AG04449 (cell line): ENCODE measurements at regions of chr22 and their contacts with region 1.

Region 1: GRCh38 chr22:28855355-28856094 is 27.8 kb upstream of the ZNRF3 start:
- DNase-seq: peak; percentile 14
- H3K4me3 ChIP-seq: no peak overlapping the region
- CTCF ChIP-seq: peak; percentile 82

Region 2: GRCh38 chr22:28779833-28780232 is 75.7 kb before region 1 on chr22:
- CTCF ChIA-PET with region 1: no interaction called
- POLR2A ChIA-PET with region 1: no interaction called
- DNase-seq: no peak
- H3K4me3 ChIP-seq: no peak overlapping the region
- CTCF ChIP-seq: no peak

Region 3: DNA sequence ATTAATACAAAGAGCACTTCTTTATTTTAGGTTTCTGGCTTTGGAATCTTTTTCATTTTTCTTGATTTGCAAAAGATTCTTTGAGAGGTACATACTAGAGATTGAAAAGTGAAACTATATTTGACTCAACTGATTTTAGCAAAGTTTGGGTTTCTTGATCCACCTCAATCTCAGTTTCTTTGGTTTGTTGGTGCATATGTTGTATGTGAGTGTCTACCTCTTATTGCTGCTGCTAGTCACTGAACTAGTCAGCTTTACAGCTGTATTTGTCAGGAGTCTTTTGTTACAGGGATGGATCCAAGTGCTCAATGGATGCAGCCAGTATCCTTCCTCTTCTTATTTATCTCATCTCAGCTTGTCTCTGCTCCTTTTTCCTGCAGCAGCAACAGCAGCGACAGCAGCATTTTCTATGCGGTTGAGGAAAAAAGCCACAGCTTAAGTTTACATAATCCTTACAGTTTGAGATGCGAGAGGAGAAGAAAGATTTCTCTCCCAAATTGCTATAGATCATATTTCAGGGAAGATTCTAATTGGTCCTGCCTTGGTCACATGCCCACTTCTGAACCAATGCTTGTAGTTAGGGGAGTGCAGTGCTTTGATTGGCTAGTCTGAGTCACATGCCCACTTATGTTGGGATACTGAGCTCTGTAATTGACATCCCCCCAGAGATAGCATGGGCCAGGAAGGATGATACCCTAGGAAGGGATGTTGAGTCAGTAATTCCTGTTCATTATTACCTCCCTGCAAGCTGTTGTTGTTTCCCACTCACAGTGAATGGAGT is 17.8 kb after region 1 on chr22:
- CTCF ChIA-PET with region 1: interaction called, 15 read pairs
- POLR2A ChIA-PET with region 1: interaction called, 6 read pairs
- DNase-seq: no peak
- H3K4me3 ChIP-seq: no peak overlapping the region
- CTCF ChIP-seq: no peak

Region 4: GRCh38 chr22:28882878-28883656 is 27.5 kb after region 1 on chr22 and contains the start of gene ZNRF3:
- CTCF ChIA-PET with region 1: interaction called, 12 read pairs
- POLR2A ChIA-PET with region 1: no interaction called
- DNase-seq: peak; percentile 50
- H3K4me3 ChIP-seq: peak within 1 kb of the TSS; percentile 69
- CTCF ChIP-seq: no peak

Region 5: GRCh38 chr22:28917747-28918549 is 62.4 kb after region 1 on chr22:
- CTCF ChIA-PET with region 1: no interaction called
- POLR2A ChIA-PET with region 1: no interaction called
- DNase-seq: no peak
- H3K4me3 ChIP-seq: no peak overlapping the region
- CTCF ChIP-seq: no peak

Region 6: GRCh38 chr22:29031227-29032011 is 175.9 kb after region 1 on chr22:
- CTCF ChIA-PET with region 1: interaction called, 268 read pairs
- POLR2A ChIA-PET with region 1: no interaction called
- DNase-seq: peak; percentile 79
- H3K4me3 ChIP-seq: peak overlapping the region; percentile 48; the same call in 1 of the 2 replicates
- CTCF ChIP-seq: peak; percentile 11

Region 7: DNA sequence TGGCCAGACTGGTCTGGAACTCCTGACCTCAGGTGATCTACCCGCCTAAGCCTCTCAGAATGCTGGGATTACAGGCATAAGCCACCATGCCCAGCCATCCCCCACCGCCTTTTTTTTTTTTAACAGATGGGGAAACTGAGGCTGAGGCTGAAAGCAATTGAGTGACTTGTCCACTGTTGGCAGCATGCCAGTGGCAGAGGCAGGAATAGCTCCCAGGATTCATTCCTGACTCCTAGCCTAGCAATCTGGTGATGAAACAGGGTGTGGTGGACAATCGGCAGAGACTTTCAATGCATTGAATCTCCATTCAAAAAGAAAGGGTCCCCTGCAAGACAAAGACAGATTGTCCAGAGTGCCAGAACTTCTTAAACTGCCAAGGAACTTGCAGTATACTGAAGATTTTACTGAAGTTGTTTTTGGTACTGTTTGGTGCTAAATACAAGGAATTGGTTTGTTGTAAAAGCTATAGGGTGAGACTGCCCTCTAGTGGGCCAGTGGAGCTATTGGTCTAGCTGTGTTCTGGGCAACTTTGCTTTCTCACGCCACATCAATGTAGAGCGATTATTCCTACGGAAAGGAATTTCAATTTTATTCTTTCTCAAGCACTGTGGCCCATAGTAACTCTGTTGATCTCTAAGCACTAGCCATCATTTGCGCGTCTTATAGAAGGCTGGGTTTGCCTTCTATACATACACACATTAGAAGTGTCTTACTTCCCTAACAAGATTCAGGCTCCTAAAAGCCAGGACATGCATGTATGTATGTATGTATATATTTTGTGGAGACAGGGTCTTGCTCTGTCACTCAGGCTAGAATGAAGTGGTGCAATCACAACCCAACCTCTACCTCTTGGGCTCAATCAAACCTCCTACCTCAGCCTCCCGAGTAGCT is 185.1 kb after region 1 on chr22:
- CTCF ChIA-PET with region 1: interaction called, 268 read pairs
- POLR2A ChIA-PET with region 1: interaction called, 5 read pairs
- DNase-seq: peak; percentile 74
- H3K4me3 ChIP-seq: no peak overlapping the region
- CTCF ChIP-seq: peak; percentile 82

Region 8: GRCh38 chr22:29055192-29055830 is 199.8 kb after region 1 on chr22:
- CTCF ChIA-PET with region 1: interaction called, 14 read pairs
- POLR2A ChIA-PET with region 1: no interaction called
- DNase-seq: no peak
- H3K4me3 ChIP-seq: no peak overlapping the region
- CTCF ChIP-seq: no peak